HCT116 (cell line): ENCODE measurements at regions of chr2 and their contacts with region 1.

Region 1: DNA sequence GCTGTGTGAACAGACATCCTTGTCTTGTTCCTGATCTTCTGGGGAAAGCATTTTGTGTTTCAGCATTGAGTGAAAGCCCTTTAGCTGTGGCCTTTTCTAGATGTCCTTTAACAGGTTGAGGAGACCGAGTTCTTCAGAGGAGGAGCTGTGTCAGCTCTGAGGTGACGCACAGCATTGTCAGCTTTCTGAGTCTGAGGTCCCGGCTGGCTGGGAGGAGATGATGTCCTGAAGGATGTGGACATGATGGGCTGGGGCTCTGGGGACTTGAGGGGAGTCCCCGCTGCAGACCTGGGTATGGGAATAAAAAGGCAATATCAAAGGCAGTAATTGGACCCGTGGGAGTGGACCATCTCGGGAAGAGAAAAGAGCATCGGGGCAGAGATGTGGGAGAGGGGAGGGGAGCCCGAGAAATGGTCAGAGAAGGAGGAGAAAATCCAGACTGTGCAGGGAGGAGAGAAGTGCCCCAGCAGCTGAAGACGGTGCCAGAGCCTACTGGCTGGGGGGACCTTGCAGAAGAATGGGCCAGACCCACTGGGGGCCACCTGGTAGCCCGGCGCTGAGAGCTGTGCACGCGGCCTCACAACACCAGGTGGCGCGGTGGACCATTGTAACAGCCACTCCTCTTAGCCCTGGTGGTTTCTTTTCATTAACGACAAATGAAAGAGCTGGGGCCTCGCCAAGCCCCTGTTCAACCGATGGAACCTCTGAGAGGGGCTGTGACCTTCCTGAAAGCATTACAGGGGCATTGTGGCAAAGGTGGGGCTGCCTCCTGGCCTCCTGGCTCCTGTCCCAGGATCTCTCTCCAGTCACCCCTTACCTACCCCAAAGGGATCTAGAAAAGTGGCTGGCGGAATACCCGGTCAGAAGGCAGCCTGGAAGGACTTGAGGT is 61.6 kb downstream of the ST3GAL5 start:
- DNase-seq: peak; percentile 27
- ATAC-seq: peak; percentile 98
- H3K4me3 ChIP-seq: peak overlapping the region; percentile 21 to 24; a peak in 3 of 4 replicates
- H3K27ac ChIP-seq: no peak overlapping the region
- H3K4me1 ChIP-seq: peaks cover 3 to 5% of the 10 kb centered on the region in 2 experiments; a peak in 1 of 4 replicates
- H3K27me3 ChIP-seq: no peaks in the 10 kb centered on the region
- CTCF ChIP-seq: peak; percentile 84 to 88 (median 86)
- POLR2A ChIP-seq: no peak
- RAD21 ChIP-seq: peak; percentile 96

Region 2: GRCh38 chr2:84846041-84846663 is 981.1 kb before region 1 on chr2:
- CTCF ChIA-PET with region 1: no interaction called
- POLR2A ChIA-PET with region 1: no interaction called
- RAD21 ChIA-PET with region 1: no interaction called
- intact Hi-C with region 1: no loop called
- DNase-seq: no peak
- ATAC-seq: no peak
- H3K4me3 ChIP-seq: no peak overlapping the region
- H3K27ac ChIP-seq: no peak overlapping the region
- H3K4me1 ChIP-seq: peaks cover 0 to 3% of the 10 kb centered on the region in 2 experiments; a peak in 1 of 4 replicates
- H3K27me3 ChIP-seq: no peaks in the 10 kb centered on the region
- CTCF ChIP-seq: no peak
- POLR2A ChIP-seq: no peak
- RAD21 ChIP-seq: no peak

Region 3: GRCh38 chr2:86017901-86018896 is 191.0 kb after region 1 on chr2:
- CTCF ChIA-PET with region 1: interaction called, 5 read pairs
- POLR2A ChIA-PET with region 1: no interaction called
- RAD21 ChIA-PET with region 1: interaction called in 1 of 2 experiments, 5 read pairs
- intact Hi-C with region 1: loop called (anchors 2 kb)
- DNase-seq: no peak
- ATAC-seq: peak; percentile 14; the same call in 1 of the 2 replicates
- H3K4me3 ChIP-seq: no peak overlapping the region
- H3K27ac ChIP-seq: no peak overlapping the region
- H3K4me1 ChIP-seq: peaks cover 6 to 10% of the 10 kb centered on the region in 2 experiments
- H3K27me3 ChIP-seq: no peaks in the 10 kb centered on the region
- CTCF ChIP-seq: no peak
- POLR2A ChIP-seq: no peak
- RAD21 ChIP-seq: no peak

Region 4: DNA sequence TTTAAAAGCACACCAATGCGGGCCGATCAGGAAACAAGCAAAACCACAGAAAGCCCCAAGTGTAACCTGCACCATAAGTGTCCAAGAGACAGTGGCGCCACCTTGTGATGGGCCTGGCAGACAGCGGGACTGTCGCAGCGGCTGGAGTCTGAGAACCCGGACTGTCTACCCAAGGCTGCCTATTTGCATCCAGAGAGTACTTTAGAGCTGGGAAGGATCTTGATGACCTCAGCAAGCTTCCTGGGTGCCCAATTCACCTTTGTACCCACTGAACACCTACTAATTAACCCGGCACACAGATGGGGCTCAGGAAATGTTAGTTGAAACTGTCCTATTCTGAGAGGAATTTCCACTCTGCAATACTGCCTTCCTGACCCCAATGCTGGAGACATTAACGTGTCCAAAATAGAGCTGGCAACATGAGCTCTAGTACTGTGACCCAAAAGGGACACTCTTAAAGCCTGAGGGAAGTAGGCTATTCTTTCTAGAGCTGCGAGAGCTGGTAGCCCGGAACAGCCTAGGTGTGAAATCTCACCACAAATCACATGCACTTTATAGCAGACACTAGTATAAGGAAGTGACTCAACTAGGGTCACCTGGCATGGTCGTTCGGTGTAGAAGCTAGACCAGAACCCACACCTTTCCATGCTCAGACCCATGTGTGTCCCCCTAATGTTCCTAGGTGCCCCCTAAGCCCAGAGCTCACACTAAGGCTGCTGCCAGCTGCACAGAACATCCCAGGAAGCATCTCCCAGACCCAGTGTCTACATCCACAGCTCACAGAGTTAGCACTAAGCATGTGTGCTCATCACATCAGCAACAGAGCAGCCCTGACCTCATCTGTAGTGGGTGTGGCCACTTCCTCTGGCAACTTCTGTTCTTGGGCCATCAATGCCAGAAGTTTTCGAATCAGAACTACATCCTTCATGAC is 253.0 kb after region 1 on chr2:
- CTCF ChIA-PET with region 1: interaction called, 95 read pairs
- POLR2A ChIA-PET with region 1: no interaction called
- RAD21 ChIA-PET with region 1: interaction called, 5 to 22 read pairs
- intact Hi-C with region 1: loop called (anchors 1 kb)
- DNase-seq: peak; percentile 24
- ATAC-seq: peak; percentile 94
- H3K4me3 ChIP-seq: no peak overlapping the region
- H3K27ac ChIP-seq: no peak overlapping the region
- H3K4me1 ChIP-seq: no peaks in the 10 kb centered on the region
- H3K27me3 ChIP-seq: no peaks in the 10 kb centered on the region
- CTCF ChIP-seq: peak; percentile 75 to 89 (median 84)
- POLR2A ChIP-seq: no peak
- RAD21 ChIP-seq: peak; percentile 79